ENCODE measurements at regions of chr5 and their contacts with region 1.

Region 1: GRCh38 chr5:112146323-112147226 is 272.5 kb downstream of the EPB41L4A start:
- DNase-seq: peak; percentile 58 to 75 (median 70)
- H3K4me3 ChIP-seq: no peak overlapping the region
- H3K4me3 Mint-ChIP-seq: no peak overlapping the region
- H3K27ac ChIP-seq: no peak overlapping the region
- H3K27ac Mint-ChIP-seq: no peak overlapping the region
- H3K4me1 ChIP-seq: peaks cover 12 to 14% of the 10 kb centered on the region in 2 donors
- H3K4me1 Mint-ChIP-seq: peaks cover 15% of the 10 kb centered on the region
- H3K27me3 ChIP-seq: no peaks in the 10 kb centered on the region
- H3K27me3 Mint-ChIP-seq: peaks cover 0 to 1% (median 0%) of the 10 kb centered on the region in 3 donors
- CTCF ChIP-seq: peak; percentile 75

Region 2: GRCh38 chr5:111158105-111158744 is 988.4 kb before region 1 on chr5:
- intact Hi-C with region 1: loop called (anchors 5 kb)
- DNase-seq: peak; percentile 19 to 47 (median 44)
- H3K4me3 ChIP-seq: no peak overlapping the region
- H3K4me3 Mint-ChIP-seq: no peak overlapping the region
- H3K27ac ChIP-seq: no peak overlapping the region
- H3K27ac Mint-ChIP-seq: no peak overlapping the region
- H3K4me1 ChIP-seq: no peaks in the 10 kb centered on the region
- H3K4me1 Mint-ChIP-seq: no peaks in the 10 kb centered on the region
- H3K27me3 ChIP-seq: no peaks in the 10 kb centered on the region
- H3K27me3 Mint-ChIP-seq: peaks cover 0 to 3% (median 3%) of the 10 kb centered on the region in 3 donors
- CTCF ChIP-seq: peak; percentile 99

Region 3: GRCh38 chr5:111550279-111551020 is 596.1 kb before region 1 on chr5:
- intact Hi-C with region 1: loop called (anchors 5 kb)
- DNase-seq: peak; percentile 77 to 92 (median 88)
- H3K4me3 ChIP-seq: no peak overlapping the region
- H3K4me3 Mint-ChIP-seq: no peak overlapping the region
- H3K27ac ChIP-seq: no peak overlapping the region
- H3K27ac Mint-ChIP-seq: peak overlapping the region in 3 of 7 donors; percentile 23 to 71 (median 46)
- H3K4me1 ChIP-seq: peaks cover 15 to 20% of the 10 kb centered on the region in 2 donors
- H3K4me1 Mint-ChIP-seq: peaks cover 17% of the 10 kb centered on the region
- H3K27me3 ChIP-seq: no peaks in the 10 kb centered on the region
- H3K27me3 Mint-ChIP-seq: peaks cover 0 to 2% (median 0%) of the 10 kb centered on the region in 3 donors
- CTCF ChIP-seq: peak; percentile 72